ENCODE measurements at regions of chr11 and their contacts with region 1.

Region 1: GRCh38 chr11:67630228-67630942 is 648 bp upstream of the NUDT8 start:
- DNase-seq: peak; percentile 99
- H3K4me3 Mint-ChIP-seq: peak overlapping the region; percentile 71
- H3K27ac Mint-ChIP-seq: peak overlapping the region; percentile 45
- H3K4me1 Mint-ChIP-seq: no peaks in the 10 kb centered on the region
- H3K27me3 Mint-ChIP-seq: no peaks in the 10 kb centered on the region
- CTCF ChIP-seq: peak; percentile 74

Region 2: GRCh38 chr11:67583247-67584204 is 46.9 kb before region 1 on chr11 and contains the start of gene GSTP1:
- CTCF ChIA-PET with region 1: interaction called, 13 read pairs
- intact Hi-C with region 1: no loop called
- DNase-seq: peak; percentile 94
- H3K4me3 Mint-ChIP-seq: peak within 1 kb of the TSS; percentile 77
- H3K27ac Mint-ChIP-seq: peak within 1 kb of the TSS; percentile 74
- H3K4me1 Mint-ChIP-seq: peaks cover 61% of the 10 kb centered on the region
- H3K27me3 Mint-ChIP-seq: no peaks in the 10 kb centered on the region
- CTCF ChIP-seq: peak; percentile 60
- total RNA-seq, gene GSTP1: 777 and 838 TPM in 2 replicates

Region 3: GRCh38 chr11:67613960-67614715 is 16.2 kb before region 1 on chr11:
- CTCF ChIA-PET with region 1: interaction called, 17 read pairs
- intact Hi-C with region 1: no loop called
- DNase-seq: peak; percentile 73
- H3K4me3 Mint-ChIP-seq: peak overlapping the region; percentile 50
- H3K27ac Mint-ChIP-seq: peak overlapping the region; percentile 76
- H3K4me1 Mint-ChIP-seq: peaks cover 16% of the 10 kb centered on the region
- H3K27me3 Mint-ChIP-seq: no peaks in the 10 kb centered on the region
- CTCF ChIP-seq: peak; percentile 70

Region 4: DNA sequence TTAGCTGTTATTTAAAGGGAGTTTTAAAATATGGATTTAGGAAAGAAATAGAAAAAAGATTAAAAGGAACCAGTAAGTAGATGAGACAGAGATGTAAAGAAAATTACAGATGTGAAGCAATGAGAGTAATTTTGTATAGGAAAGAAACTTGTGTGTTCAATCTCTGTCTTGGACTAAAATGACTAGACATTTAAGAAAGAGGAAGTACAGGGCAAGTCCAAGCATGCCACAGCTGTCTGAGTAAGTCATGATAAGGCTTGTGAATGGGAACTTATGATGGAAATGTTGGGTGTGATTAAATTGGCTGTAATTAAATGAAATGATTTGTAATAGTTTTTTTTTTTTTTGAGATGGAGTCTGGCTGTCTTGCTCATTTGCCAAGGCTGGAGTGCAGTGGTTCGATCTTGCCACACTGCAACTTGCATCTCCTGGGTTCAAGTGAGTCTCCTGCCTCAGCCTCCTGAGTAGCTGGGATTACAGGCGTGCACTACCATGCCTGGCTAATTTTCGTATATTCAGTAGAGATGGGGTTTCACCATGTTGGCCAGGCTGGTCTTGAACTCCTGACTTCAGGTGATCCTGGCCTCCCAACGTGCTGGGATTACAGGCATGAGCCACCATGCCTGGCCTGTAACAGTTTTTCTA is 26.0 kb after region 1 on chr11:
- CTCF ChIA-PET with region 1: interaction called, 17 read pairs
- intact Hi-C with region 1: loop called (anchors 2 kb)
- DNase-seq: no peak
- H3K4me3 Mint-ChIP-seq: no peak overlapping the region
- H3K27ac Mint-ChIP-seq: no peak overlapping the region
- H3K4me1 Mint-ChIP-seq: peaks cover 18% of the 10 kb centered on the region
- H3K27me3 Mint-ChIP-seq: no peaks in the 10 kb centered on the region
- CTCF ChIP-seq: no peak

Region 5: DNA sequence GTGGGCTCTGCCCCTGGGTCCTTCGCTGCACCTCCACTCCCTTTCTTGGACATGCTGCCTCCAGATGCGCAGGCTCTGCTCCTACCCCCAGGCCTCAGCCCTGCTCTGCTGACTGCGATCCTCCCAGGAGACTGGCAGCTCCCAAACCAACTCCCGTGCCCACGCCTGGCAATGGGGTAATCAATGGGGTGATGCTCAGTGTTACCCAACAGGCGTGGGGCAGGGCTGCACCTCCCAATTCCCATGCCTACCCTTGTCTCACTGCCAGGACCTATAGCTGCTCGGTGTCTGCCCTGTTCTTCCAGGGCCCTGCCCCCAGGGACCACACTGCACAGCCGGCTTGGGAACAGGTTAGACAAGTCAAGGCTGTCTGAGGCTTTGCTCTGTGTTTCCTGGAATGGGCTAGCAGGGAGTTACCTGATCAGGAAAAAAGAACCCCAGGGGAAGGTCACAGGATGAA is 44.1 kb after region 1 on chr11 and contains the start of gene ALDH3B2:
- CTCF ChIA-PET with region 1: interaction called, 11 read pairs
- intact Hi-C with region 1: no loop called
- DNase-seq: peak; percentile 88
- H3K4me3 Mint-ChIP-seq: peak within 1 kb of the TSS; percentile 56
- H3K27ac Mint-ChIP-seq: peak within 1 kb of the TSS; percentile 71
- H3K4me1 Mint-ChIP-seq: peaks cover 21% of the 10 kb centered on the region
- H3K27me3 Mint-ChIP-seq: no peaks in the 10 kb centered on the region
- CTCF ChIP-seq: no peak
- total RNA-seq, gene ALDH3B2: 2.4 and 2.9 TPM in 2 replicates

Region 6: GRCh38 chr11:68020575-68020974 is 390.2 kb after region 1 on chr11:
- CTCF ChIA-PET with region 1: no interaction called
- intact Hi-C with region 1: no loop called
- DNase-seq: peak; percentile 50
- H3K4me3 Mint-ChIP-seq: peak overlapping the region; percentile 11
- H3K27ac Mint-ChIP-seq: peak overlapping the region; percentile 75
- H3K4me1 Mint-ChIP-seq: peaks cover 45% of the 10 kb centered on the region
- H3K27me3 Mint-ChIP-seq: no peaks in the 10 kb centered on the region
- CTCF ChIP-seq: no peak

Region 7: GRCh38 chr11:68099474-68100405 is 469.4 kb after region 1 on chr11:
- CTCF ChIA-PET with region 1: no interaction called
- intact Hi-C with region 1: no loop called
- DNase-seq: peak; percentile 68
- H3K4me3 Mint-ChIP-seq: peak overlapping the region; percentile 43
- H3K27ac Mint-ChIP-seq: peak overlapping the region; percentile 61
- H3K4me1 Mint-ChIP-seq: peaks cover 62% of the 10 kb centered on the region
- H3K27me3 Mint-ChIP-seq: no peaks in the 10 kb centered on the region
- CTCF ChIP-seq: no peak